Activated CD4-positive, alpha-beta T cell treated with anti-CD3 and anti-CD28 coated beads for 36 hours (primary cell): ENCODE measurements at regions of chr12 and their contacts with region 1.

Region 1: DNA sequence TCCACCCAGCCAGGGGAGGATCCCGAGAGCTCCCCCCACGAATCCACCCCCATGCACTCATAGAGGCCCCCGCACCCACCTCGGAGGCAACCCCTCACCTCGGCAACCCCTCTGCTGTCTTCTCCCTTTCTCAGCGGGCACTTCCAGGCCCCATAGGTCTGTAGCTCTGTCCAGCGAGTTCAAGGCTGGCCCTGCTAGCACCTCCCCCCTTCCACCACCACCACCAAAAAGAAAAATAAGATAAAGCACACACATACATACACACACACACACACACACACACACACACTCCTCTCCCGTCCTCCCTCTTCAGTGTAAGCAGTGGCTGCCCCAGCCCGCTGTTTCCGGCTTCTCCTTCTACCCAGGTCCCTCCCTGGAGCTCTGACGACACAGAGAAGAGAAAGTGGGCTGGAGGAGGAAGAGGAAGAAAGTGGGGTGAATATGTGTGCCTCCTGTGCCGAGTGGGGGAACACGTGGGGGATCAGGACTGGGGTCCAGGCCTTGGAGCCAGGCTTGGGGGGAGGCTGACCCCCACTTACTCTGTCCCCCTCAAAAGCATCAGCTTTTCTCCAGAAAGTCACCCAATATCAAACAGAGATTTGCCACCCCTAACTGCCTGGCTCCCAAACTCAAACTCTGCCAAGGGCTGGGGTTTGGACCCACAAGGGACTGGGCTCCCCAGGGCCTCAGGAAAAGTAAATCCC is at the start of gene STAT6:
- DNase-seq: peak; percentile 89
- ATAC-seq: peak; percentile 65
- H3K4me3 Mint-ChIP-seq: peak within 1 kb of the TSS; percentile 98
- H3K27ac Mint-ChIP-seq: peak within 1 kb of the TSS; percentile 97
- H3K4me1 Mint-ChIP-seq: peaks cover 50% of the 10 kb centered on the region
- H3K27me3 Mint-ChIP-seq: no peaks in the 10 kb centered on the region
- total RNA-seq, gene STAT6: 250 to 288 TPM

Region 2: DNA sequence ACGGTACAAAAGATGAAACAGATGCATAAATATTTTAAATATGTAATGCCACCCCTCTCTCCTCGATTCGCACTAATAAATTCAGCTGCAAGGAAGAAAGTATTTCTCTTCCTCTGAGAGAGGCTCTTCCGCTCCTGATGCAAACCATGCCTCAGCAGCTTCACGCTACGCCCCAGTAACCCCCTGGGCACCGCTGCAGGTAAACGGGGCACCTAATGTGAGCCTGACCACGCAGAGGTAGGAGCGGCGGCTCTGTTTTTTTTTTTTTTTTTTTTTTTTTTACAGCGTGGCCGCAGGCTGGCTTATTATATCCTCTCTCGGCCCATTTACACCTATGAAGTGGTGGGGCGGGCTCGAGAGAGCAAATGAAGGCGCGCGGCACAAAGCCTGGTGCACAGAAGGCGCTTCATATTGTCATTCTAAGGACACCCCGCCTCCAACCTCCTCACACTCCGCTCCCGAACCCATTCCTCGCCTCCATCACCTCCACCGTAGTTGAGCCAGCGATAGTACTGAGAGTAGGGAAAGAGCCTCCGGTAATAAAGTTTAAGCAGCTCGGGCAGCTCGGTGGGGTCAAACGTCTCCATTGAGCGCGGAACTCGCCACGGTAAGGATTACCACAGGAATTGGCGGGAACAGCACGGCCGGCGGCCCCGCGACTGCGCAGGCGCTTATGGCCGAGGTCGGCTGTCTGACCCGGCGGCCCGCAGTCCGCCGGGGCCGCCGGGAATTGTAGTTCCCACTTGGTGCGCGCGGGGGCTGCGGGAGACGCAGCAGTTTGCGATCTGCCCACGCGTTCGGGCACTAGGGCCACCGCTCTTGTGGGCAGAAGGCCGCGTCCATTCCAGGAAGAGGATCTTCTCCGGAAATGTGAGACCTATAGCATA is 359.2 kb before region 1 on chr12 and contains the start of gene PRIM1:
- CTCF ChIA-PET with region 1: interaction called, 4 read pairs
- POLR2A ChIA-PET with region 1: interaction called, 4 read pairs
- intact Hi-C with region 1: loop called (anchors 1 to 5 kb)
- DNase-seq: peak; percentile 95
- ATAC-seq: peak; percentile 91
- H3K4me3 Mint-ChIP-seq: peak within 1 kb of the TSS; percentile 84
- H3K27ac Mint-ChIP-seq: peak within 1 kb of the TSS; percentile 99
- H3K4me1 Mint-ChIP-seq: peaks cover 32% of the 10 kb centered on the region
- H3K27me3 Mint-ChIP-seq: no peaks in the 10 kb centered on the region
- total RNA-seq, gene PRIM1: 81.3 to 83.7 TPM

Region 3: GRCh38 chr12:57005980-57006808 is 105.0 kb before region 1 on chr12 and contains the start of gene ZBTB39:
- CTCF ChIA-PET with region 1: interaction called, 18 read pairs
- POLR2A ChIA-PET with region 1: interaction called, 7 read pairs
- intact Hi-C with region 1: loop called (anchors 1 kb)
- DNase-seq: peak; percentile 80
- ATAC-seq: peak; percentile 69
- H3K4me3 Mint-ChIP-seq: peak within 1 kb of the TSS; percentile 79
- H3K27ac Mint-ChIP-seq: peak within 1 kb of the TSS; percentile 78
- H3K4me1 Mint-ChIP-seq: peaks cover 64% of the 10 kb centered on the region
- H3K27me3 Mint-ChIP-seq: no peaks in the 10 kb centered on the region
- total RNA-seq, gene ZBTB39: 6.4 to 6.6 TPM

Region 4: GRCh38 chr12:57069523-57069922 is 41.7 kb before region 1 on chr12:
- CTCF ChIA-PET with region 1: interaction called, 411 read pairs
- POLR2A ChIA-PET with region 1: interaction called, 20 read pairs
- intact Hi-C with region 1: loop called (anchors 1 kb)
- DNase-seq: peak; percentile 74
- ATAC-seq: peak; percentile 73
- H3K4me3 Mint-ChIP-seq: peak overlapping the region; percentile 39
- H3K27ac Mint-ChIP-seq: peak overlapping the region; percentile 89
- H3K4me1 Mint-ChIP-seq: peaks cover 74% of the 10 kb centered on the region
- H3K27me3 Mint-ChIP-seq: no peaks in the 10 kb centered on the region

Region 5: DNA sequence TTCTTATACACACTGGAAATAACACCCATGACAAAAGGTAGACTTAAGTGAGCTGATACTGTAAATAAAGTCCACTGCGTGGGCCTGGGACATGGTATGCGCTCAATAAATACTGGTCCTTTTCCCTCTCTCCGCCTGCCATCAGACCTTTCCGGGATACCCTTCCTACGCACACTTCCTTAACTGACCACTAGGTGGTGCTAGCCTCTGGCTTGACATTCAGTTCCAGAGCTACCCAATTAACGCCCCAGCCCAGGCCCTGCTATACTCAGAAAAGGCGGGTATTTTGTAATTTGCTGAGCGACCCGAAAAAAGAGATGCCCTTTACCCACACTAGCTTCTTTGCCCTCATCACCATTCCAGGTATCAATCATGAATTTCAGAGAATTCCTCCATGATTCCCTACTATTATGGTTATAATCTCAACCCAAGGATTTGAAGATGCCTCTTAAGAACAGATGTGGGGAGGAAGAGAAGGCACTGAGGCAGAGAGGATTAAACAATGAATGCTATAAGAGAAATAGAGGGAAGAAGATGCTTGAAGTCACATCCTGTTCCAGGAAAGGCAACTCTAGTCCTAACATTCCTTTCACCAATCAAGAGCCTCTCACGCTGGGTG is 13.2 kb after region 1 on chr12:
- CTCF ChIA-PET with region 1: interaction called, 63 read pairs
- POLR2A ChIA-PET with region 1: interaction called, 15 read pairs
- intact Hi-C with region 1: loop called in 1 of 2 experiments (anchors 1 kb)
- DNase-seq: peak; percentile 87
- ATAC-seq: peak; percentile 77
- H3K4me3 Mint-ChIP-seq: peak overlapping the region; percentile 1
- H3K27ac Mint-ChIP-seq: no peak overlapping the region
- H3K4me1 Mint-ChIP-seq: peaks cover 14% of the 10 kb centered on the region
- H3K27me3 Mint-ChIP-seq: peaks cover 9% of the 10 kb centered on the region

Region 6: GRCh38 chr12:57238854-57239554 is 127.8 kb after region 1 on chr12:
- CTCF ChIA-PET with region 1: interaction called, 13 read pairs
- POLR2A ChIA-PET with region 1: no interaction called
- intact Hi-C with region 1: loop called in 1 of 2 experiments (anchors 5 kb)
- DNase-seq: peak; percentile 94
- ATAC-seq: peak; percentile 57
- H3K4me3 Mint-ChIP-seq: peak overlapping the region; percentile 83
- H3K27ac Mint-ChIP-seq: peak overlapping the region; percentile 80
- H3K4me1 Mint-ChIP-seq: peaks cover 70% of the 10 kb centered on the region
- H3K27me3 Mint-ChIP-seq: peaks cover 44% of the 10 kb centered on the region